Right ventricle myocardium inferior (tissue), 1 donor: ENCODE measurements at regions of chr15 and their contacts with region 1.

Region 1: DNA sequence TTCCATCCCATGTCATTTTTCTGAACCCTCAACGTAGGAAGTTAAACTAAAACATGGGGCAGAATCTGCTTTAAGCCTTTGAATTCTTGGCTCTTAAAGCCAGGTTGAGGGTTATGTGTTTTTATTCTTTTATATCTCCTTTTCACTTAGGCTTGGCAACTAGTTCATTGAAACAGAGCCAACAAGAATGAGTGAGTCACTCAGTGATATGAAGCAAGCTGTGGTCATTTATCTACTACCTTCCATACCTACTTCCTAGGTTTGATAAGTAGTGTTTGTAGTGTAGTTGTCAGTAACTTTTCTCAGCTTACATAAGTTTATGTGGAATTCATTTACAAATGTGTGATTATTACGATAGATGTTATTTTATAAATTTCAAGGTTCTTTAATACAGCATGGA is 67.4 kb downstream of the SNRPN start:
- DNase-seq: no peak
- ATAC-seq: no peak

Region 2: DNA sequence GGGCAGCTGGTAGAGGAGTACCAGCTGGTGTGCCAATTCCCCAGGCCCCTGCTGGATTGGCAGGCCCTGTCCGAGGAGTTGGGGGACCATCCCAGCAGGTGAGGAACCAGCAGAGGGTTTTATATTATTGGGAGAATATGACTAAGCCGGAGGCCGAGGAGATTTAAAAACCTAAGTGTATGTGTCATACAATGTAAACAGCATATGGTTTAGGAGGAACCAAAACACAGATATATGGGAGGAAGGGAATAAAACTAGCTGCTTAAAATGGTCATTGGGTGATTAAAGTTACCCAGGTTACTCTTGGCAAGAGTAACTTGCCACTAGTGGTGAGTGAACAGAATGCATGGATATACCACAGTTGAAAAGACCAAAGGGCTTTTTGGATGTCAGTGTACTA is 45.3 kb before region 1 on chr15:
- intact Hi-C with region 1: loop called (anchors 10 kb)
- DNase-seq: no peak
- ATAC-seq: no peak

Region 3: GRCh38 chr15:25092661-25093060 is 70.4 kb after region 1 on chr15:
- intact Hi-C with region 1: loop called (anchors 10 kb)
- DNase-seq: no peak
- ATAC-seq: no peak